ENCODE measurements at regions of chr12 and their contacts with region 1.

Region 1: DNA sequence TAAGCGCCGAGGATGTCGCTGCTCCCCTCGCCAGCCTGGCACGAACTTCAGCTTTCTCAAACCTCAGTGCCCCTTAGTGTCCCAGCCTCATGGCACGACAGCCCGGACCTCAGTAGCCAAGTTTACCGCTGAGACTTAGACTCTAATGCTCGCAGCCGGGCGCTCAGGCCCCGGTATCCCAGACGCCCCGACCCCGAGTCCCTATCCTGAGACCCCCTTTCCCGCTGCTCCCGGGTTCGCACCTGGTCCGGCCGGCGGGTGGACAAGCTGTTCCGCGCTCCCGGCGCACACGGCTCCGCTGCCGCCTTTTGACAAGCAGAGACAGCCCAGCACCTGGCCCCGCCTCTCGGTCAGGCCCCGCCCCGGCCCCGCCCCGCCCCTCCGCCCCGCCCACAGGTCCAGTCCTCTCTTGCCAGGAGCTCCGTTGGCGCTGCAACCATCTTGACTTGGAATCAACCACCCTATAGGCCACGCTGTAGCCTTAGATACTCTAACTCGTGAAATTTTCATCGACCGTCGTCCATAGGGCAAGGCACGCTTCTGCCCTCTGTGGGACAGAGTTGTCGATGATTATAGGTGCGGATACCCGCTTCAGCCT is at the start of gene VDR:
- DNase-seq: peak; percentile 96

Region 2: GRCh38 chr12:47858511-47859266 is 46.1 kb before region 1 on chr12:
- CTCF ChIA-PET with region 1: no interaction called
- POLR2A ChIA-PET with region 1: no interaction called
- DNase-seq: no peak

Region 3: GRCh38 chr12:47892819-47893218 is 12.0 kb before region 1 on chr12:
- CTCF ChIA-PET with region 1: no interaction called
- POLR2A ChIA-PET with region 1: interaction called, 11 read pairs
- DNase-seq: no peak

Measured in HEK293T (cell line).